ENCODE measurements at regions of chr1 and their contacts with region 1.

Region 1: DNA sequence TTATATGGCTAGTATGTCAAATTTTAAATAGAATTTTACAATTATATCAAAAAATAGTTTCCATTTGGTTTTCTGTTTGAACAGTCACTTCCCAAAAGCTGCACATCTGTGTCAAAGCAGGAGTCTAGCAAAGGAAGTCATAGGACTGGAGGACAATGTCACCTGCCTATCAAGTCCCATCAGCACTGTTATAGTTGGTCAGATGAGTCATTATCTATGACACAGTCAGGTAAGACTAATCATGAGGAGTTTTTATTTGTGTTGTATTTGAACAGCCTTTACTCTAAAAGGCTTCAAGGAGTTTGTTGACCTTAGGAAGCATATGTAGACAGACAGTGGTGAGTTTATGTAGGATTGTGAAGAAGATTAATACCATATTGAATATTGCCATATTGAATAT is 74.2 kb upstream of the QSOX1 start:
- DNase-seq: no peak
- ATAC-seq: no peak
- H3K4me3 Mint-ChIP-seq: no peak overlapping the region
- H3K27ac Mint-ChIP-seq: no peak overlapping the region
- H3K4me1 Mint-ChIP-seq: no peaks in the 10 kb centered on the region
- H3K27me3 Mint-ChIP-seq: no peaks in the 10 kb centered on the region
- CTCF ChIP-seq: no peak

Region 2: DNA sequence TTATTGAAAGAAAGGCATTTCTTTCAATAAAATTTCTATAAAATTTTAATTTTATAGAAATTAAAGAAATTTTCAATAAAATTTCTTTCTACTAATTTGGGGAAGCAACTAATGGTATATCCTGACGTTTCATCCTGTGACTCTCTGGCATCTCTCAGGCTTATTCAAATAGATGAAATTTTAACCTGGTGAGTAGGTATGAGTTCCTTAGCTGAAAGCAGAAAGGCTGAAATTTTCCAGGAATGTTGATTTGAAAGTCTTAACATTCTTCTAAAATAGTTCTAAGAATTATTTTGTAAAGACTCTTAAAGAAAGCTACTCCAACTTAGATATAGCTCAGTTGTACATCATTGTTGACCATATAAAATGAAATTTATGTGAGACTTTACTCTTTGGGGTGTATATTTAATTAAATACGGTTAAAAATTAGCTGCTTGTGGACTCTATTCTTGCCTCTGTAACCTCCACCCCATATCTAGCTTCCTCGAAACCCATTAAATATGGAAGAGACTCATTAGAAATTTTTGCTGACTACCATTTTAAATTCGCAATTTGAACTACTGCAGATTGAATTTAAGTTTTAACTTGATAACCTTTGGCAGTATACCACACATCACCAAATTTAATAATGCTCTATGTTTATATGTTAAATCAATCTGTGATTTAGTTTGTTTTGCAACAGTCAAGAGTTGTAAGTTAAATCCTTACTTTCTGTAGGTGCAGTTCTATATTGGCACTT is 14.5 kb before region 1 on chr1:
- CTCF ChIA-PET with region 1: no interaction called
- POLR2A ChIA-PET with region 1: interaction called, 3 read pairs
- intact Hi-C with region 1: loop called (anchors 1 kb)
- DNase-seq: no peak
- ATAC-seq: no peak
- H3K4me3 Mint-ChIP-seq: no peak overlapping the region
- H3K27ac Mint-ChIP-seq: no peak overlapping the region
- H3K4me1 Mint-ChIP-seq: no peaks in the 10 kb centered on the region
- H3K27me3 Mint-ChIP-seq: no peaks in the 10 kb centered on the region
- CTCF ChIP-seq: no peak

Region 3: GRCh38 chr1:180092931-180093559 is 12.6 kb after region 1 on chr1:
- CTCF ChIA-PET with region 1: no interaction called
- POLR2A ChIA-PET with region 1: interaction called, 11 read pairs
- intact Hi-C with region 1: no loop called
- DNase-seq: no peak
- ATAC-seq: no peak
- H3K4me3 Mint-ChIP-seq: no peak overlapping the region
- H3K27ac Mint-ChIP-seq: no peak overlapping the region
- H3K4me1 Mint-ChIP-seq: no peaks in the 10 kb centered on the region
- H3K27me3 Mint-ChIP-seq: no peaks in the 10 kb centered on the region
- CTCF ChIP-seq: no peak

Region 4: GRCh38 chr1:180154325-180155181 is 74.1 kb after region 1 on chr1 and contains the start of gene QSOX1:
- CTCF ChIA-PET with region 1: no interaction called
- POLR2A ChIA-PET with region 1: no interaction called
- intact Hi-C with region 1: no loop called
- DNase-seq: peak; percentile 79
- ATAC-seq: peak; percentile 97
- H3K4me3 Mint-ChIP-seq: peak within 1 kb of the TSS; percentile 96
- H3K27ac Mint-ChIP-seq: peak within 1 kb of the TSS; percentile 83
- H3K4me1 Mint-ChIP-seq: peaks cover 23% of the 10 kb centered on the region
- H3K27me3 Mint-ChIP-seq: no peaks in the 10 kb centered on the region
- CTCF ChIP-seq: no peak
- total RNA-seq, gene QSOX1: 11.9 and 12.9 TPM in 2 replicates

Measured in activated B cell treated with CpG ODN at 0.5 μM for 24 hours (primary cell).